Esophagus muscularis mucosa (tissue), 4 donors: ENCODE measurements at regions of chr11 and their contacts with region 1.

Region 1: GRCh38 chr11:69010964-69011623 is 2.0 kb downstream of the MRGPRF start:
- DNase-seq: no peak
- H3K4me3 ChIP-seq: peak overlapping the region; percentile 65 to 83 (median 72)
- H3K27ac ChIP-seq: peak overlapping the region; percentile 95 to 99 (median 97)
- H3K4me1 ChIP-seq: peaks cover 57 to 92% (median 79%) of the 10 kb centered on the region in 4 donors
- H3K27me3 ChIP-seq: peaks cover 0 to 18% (median 0%) of the 10 kb centered on the region in 4 donors
- CTCF ChIP-seq: no peak
- EP300 ChIP-seq: no peak
- POLR2A ChIP-seq: peak; percentile 69

Region 2: GRCh38 chr11:68839054-68839865 is 171.8 kb before region 1 on chr11:
- intact Hi-C with region 1: loop called (anchors 5 kb)
- DNase-seq: peak; percentile 98
- H3K4me3 ChIP-seq: peak overlapping the region; percentile 92 to 99 (median 98)
- H3K27ac ChIP-seq: peak overlapping the region; percentile 95 to 97 (median 97)
- H3K4me1 ChIP-seq: peaks cover 66 to 91% (median 87%) of the 10 kb centered on the region in 4 donors
- H3K27me3 ChIP-seq: no peaks in the 10 kb centered on the region
- CTCF ChIP-seq: no peak
- EP300 ChIP-seq: peak; percentile 44
- POLR2A ChIP-seq: peak; percentile 30

Region 3: GRCh38 chr11:69048718-69049489 is 37.8 kb after region 1 on chr11 and contains the start of gene TPCN2:
- intact Hi-C with region 1: loop called (anchors 2 kb)
- DNase-seq: peak; percentile 97
- H3K4me3 ChIP-seq: peak within 1 kb of the TSS; percentile 82 to 99 (median 88)
- H3K27ac ChIP-seq: peak within 1 kb of the TSS; percentile 98 to 100 (median 98)
- H3K4me1 ChIP-seq: peaks cover 49 to 64% (median 61%) of the 10 kb centered on the region in 4 donors
- H3K27me3 ChIP-seq: no peaks in the 10 kb centered on the region
- CTCF ChIP-seq: no peak
- EP300 ChIP-seq: no peak
- POLR2A ChIP-seq: peak; percentile 79
- total RNA-seq, gene TPCN2: 18.7 to 34.5 (median 24.7) TPM

Region 4: DNA sequence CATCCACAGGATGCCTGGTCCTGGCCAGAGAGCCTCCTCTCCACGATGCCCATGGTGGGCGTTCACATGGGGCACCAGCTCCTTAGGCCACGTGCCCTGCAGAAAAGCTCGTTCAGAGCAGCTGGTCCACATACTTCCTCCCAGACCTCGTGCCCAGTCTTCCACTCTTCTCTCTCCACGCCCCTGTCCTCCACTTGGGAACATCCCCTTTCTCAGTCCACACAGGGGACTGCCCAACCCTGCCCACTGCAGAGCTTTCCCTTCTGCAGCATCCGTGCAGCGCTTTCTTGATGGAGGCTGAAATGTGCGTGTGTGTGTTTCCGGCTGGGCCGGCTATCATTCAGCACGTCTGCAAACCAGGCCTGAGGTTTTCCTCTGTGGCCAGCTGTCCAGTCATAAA is 48.9 kb after region 1 on chr11:
- intact Hi-C with region 1: no loop called
- DNase-seq: no peak
- H3K4me3 ChIP-seq: no peak overlapping the region
- H3K27ac ChIP-seq: no peak overlapping the region
- H3K4me1 ChIP-seq: peaks cover 13 to 91% (median 64%) of the 10 kb centered on the region in 4 donors
- H3K27me3 ChIP-seq: no peaks in the 10 kb centered on the region
- CTCF ChIP-seq: no peak
- EP300 ChIP-seq: no peak
- POLR2A ChIP-seq: no peak

Region 5: DNA sequence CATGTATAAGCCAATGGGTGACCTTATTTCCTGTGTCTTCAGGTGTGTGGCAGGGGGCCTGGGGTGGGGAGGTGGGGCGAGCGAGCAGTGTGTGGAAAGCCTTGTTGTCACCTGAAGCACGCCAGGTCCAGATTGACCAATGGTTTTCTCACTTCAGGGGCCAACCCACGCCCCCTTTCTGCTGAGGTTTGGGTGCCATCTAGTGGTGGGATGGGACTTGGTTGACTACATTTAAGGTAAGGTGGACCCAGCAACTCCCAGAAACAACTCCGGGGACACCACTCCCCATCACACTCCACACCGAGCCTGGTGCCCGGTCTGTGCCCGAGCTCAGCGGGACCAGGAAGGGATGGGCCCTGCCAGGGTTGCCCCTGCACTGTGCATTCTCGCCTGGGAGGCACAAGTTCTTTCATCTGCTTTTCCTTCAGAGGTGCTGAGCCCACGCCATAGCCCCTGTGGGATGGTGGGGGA is 77.6 kb after region 1 on chr11:
- intact Hi-C with region 1: loop called (anchors 2 kb)
- DNase-seq: peak; percentile 94
- H3K4me3 ChIP-seq: no peak overlapping the region
- H3K27ac ChIP-seq: peak overlapping the region; percentile 87 to 92 (median 88)
- H3K4me1 ChIP-seq: peaks cover 27 to 54% (median 48%) of the 10 kb centered on the region in 4 donors
- H3K27me3 ChIP-seq: no peaks in the 10 kb centered on the region
- CTCF ChIP-seq: peak; percentile 71 to 77 (median 75)
- EP300 ChIP-seq: no peak
- POLR2A ChIP-seq: no peak

Region 6: DNA sequence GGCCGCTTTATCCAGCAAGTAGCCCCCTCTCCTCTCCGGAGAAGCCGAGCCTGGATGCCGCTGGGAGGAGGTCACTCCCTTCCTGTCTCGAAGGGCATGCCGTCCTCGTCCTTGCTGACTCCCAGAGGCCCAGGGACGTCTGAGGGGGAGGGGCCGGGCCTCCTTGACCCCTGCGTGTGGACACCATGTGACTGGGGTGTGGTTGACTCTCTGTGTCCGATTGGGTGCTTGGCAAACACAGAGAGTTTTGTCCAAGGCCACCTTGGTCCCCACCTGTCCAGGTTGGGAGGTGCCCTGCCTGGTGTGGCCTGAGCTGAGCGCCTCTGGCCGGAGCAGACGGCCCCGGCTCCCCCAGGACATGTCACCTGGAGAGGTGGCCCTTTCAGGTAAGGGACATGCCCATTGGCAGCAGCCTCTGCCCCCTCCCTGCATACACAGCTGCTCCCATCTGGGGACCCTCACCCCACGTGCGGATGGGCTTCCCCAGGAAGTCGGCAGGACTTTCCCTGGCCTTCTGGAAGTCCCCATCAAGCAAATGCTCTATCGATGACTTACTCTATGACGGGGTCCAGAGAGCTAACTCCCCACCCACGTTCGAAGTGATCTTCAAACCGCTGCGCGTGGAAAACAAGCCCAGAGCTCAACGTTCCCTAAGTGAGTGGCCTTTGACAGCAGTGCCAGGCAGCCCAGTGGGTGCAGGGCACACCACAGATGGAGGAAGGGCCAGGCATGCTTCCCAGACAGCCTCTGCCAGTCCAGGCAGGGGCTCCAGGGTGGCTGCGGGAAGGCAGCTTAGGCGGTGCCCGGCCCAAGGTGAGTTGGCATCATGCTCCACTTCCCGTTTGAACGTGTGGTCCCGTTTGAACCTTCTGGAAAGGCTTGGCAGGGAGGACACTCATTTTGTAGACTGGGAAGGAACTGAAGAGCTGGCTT is 144.5 kb after region 1 on chr11 and contains the start of gene SMIM38:
- intact Hi-C with region 1: no loop called
- DNase-seq: no peak
- H3K4me3 ChIP-seq: no peak within 1 kb of the TSS
- H3K27ac ChIP-seq: peak within 1 kb of the TSS; percentile 43 to 70 (median 60)
- H3K4me1 ChIP-seq: peaks cover 25 to 38% (median 29%) of the 10 kb centered on the region in 4 donors
- H3K27me3 ChIP-seq: no peaks in the 10 kb centered on the region
- CTCF ChIP-seq: no peak
- EP300 ChIP-seq: no peak
- POLR2A ChIP-seq: no peak
- total RNA-seq, gene SMIM38: 0.50 to 4.2 (median 2.6) TPM

Region 7: DNA sequence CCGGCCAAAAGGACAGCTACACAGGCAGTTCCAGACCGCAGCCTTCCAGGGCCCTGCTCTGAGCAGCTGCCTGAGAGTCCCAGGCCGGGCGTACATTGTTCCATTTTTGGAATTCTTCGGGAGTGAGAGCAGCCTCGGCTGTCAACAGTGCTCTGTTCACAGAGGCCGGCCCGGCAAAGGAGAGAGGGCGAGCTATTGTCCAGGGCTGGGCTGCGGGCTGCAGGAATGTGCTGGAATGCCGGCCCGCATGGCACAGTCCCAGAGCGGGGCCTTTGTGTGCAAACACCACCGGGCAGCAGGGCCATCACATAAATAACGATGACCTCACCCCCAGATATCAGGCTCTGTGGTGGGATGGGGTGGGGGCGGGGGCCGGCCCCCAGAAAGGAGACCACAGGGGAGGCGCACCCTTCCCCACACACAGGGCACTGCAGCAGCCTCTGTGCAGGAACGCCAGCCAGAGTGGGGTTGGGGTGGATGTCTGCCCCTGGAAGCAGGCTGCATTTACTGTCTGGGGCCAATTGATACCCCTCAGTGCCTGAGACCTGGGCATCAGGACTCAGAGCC is 486.2 kb after region 1 on chr11:
- intact Hi-C with region 1: no loop called
- DNase-seq: no peak
- H3K4me3 ChIP-seq: no peak overlapping the region
- H3K27ac ChIP-seq: peak overlapping the region; percentile 81 to 86 (median 84)
- H3K4me1 ChIP-seq: peaks cover 21 to 49% (median 38%) of the 10 kb centered on the region in 4 donors
- H3K27me3 ChIP-seq: no peaks in the 10 kb centered on the region
- CTCF ChIP-seq: no peak
- EP300 ChIP-seq: no peak
- POLR2A ChIP-seq: no peak